Mammary epithelial cell (primary cell): ENCODE measurements at regions of chr1 and their contacts with region 1.

Region 1: GRCh38 chr1:157773493-157774350 is 3.2 kb downstream of the FCRL2 start:
- DNase-seq: no peak
- H3K4me3 ChIP-seq: no peak overlapping the region
- H3K27ac ChIP-seq: no peak overlapping the region
- H3K4me1 ChIP-seq: no peaks in the 10 kb centered on the region
- H3K27me3 ChIP-seq: peaks cover 6% of the 10 kb centered on the region
- CTCF ChIP-seq: peak; percentile 13 to 31

Region 2: GRCh38 chr1:157580179-157580827 is 193.4 kb before region 1 on chr1:
- CTCF ChIA-PET with region 1: no interaction called
- dilution Hi-C with region 1: no loop called
- in situ Hi-C with region 1: no loop called
- intact Hi-C with region 1: loop called (anchors 5 kb)
- DNase-seq: peak; percentile 58
- H3K4me3 ChIP-seq: no peak overlapping the region
- H3K27ac ChIP-seq: no peak overlapping the region
- H3K4me1 ChIP-seq: no peaks in the 10 kb centered on the region
- H3K27me3 ChIP-seq: peaks cover under 1% of the 10 kb centered on the region
- CTCF ChIP-seq: peak; percentile 76

Region 3: GRCh38 chr1:157852476-157852875 is 78.8 kb after region 1 on chr1:
- CTCF ChIA-PET with region 1: no interaction called
- dilution Hi-C with region 1: no loop called
- in situ Hi-C with region 1: loop called in 1 of 2 experiments (anchors 25 kb)
- intact Hi-C with region 1: no loop called
- DNase-seq: peak; percentile 90
- H3K4me3 ChIP-seq: no peak overlapping the region
- H3K27ac ChIP-seq: peak overlapping the region; percentile 31
- H3K4me1 ChIP-seq: peaks cover 18% of the 10 kb centered on the region
- H3K27me3 ChIP-seq: no peaks in the 10 kb centered on the region
- CTCF ChIP-seq: no peak

Region 4: DNA sequence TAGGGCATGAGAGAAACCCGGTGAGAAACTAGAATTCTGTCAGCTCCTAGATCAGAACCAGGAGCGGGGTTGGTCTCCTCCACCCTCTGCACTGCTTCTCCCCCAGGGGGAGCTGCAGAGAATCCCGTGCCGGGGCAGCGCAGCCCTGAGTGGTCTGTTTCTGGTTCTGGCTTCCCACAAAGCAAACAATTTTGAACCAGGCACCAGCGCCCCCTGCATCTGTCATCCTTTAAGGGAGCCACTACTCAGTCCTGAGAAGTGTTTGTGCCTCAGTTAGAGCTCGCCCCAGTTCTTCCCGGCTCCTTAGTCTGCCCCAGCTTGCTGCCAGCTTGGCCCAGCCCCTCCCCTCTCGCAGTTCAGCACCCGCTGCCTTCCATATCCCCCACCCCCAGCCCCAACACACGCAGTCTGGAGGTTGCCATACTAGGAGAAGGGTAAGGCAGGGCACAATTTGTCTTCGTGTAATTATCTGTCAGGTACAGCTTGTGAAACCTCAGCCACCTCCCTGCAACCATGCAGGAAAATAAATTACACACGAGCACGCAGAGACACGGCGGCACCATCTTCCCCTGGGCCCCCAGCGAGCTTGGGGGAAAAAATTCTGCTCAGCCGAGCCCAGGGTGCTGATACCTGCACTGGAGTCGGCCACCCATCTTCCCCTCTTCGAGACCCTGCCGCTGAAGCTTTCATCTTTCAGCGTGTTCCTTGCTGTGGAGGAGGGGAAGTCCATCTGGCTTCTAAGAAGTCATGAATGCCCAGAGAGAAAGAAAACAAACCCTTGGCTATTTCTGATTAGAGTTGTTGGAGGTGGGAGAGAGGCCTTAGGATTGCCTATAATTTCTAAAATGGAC is 344.4 kb after region 1 on chr1:
- CTCF ChIA-PET with region 1: no interaction called
- dilution Hi-C with region 1: no loop called
- in situ Hi-C with region 1: no loop called
- intact Hi-C with region 1: no loop called
- DNase-seq: no peak
- H3K4me3 ChIP-seq: no peak overlapping the region
- H3K27ac ChIP-seq: no peak overlapping the region
- H3K4me1 ChIP-seq: peaks cover 8% of the 10 kb centered on the region
- H3K27me3 ChIP-seq: no peaks in the 10 kb centered on the region
- CTCF ChIP-seq: peak; percentile 44 to 72